Left ventricle myocardium superior (tissue), 1 donor: ENCODE measurements at regions of chr18 and their contacts with region 1.

Region 1: GRCh38 chr18:63439334-63439733 is 17.1 kb upstream of the VPS4B start:
- DNase-seq: no peak
- ATAC-seq: peak; percentile 71

Region 2: GRCh38 chr18:63016270-63016669 is 423.1 kb before region 1 on chr18:
- intact Hi-C with region 1: loop called (anchors 10 kb)
- DNase-seq: no peak
- ATAC-seq: peak; percentile 50

Region 3: DNA sequence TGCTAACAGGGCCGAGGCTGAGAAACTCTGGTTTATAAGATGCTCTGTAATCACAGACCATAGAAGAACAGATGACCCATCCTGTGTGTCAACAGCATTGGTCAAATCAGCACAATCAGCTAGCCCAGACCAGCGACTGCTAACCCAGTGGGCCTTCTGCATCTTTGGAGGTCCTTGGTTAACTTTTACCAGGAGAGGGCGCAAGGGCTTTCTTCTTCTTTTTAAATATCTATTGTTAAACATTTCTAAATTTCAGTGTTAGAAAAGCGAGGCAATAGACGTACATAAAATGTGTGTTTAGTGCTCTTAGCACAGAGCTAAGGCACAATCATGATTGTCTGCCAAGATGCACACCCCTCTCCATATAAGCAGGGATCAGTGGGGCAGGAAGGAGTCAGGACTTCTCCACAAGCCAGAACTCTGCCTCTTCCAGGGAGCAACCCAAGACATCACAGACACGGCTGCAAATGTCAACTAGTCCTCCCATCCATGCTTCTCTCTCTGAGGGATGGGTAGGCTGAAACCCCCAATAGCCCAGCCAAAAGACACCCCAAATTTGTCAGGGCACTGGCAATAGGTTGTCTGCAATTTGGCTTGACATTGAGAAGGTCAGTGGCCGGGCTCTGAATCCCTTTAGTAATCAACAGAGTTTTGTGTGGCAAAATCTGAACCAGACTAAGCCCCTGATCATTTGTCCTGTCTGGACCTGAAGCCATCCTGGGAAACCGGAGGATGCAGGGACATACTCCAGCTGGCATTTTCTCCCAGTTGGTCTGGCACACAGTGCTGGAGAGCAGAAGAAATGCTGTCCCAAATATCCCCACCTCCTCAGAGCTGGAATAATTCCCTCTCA is 308.0 kb before region 1 on chr18:
- intact Hi-C with region 1: loop called (anchors 10 kb)
- DNase-seq: no peak
- ATAC-seq: peak; percentile 77

Region 4: GRCh38 chr18:63322841-63323634 is 116.3 kb before region 1 on chr18:
- intact Hi-C with region 1: no loop called
- DNase-seq: no peak
- ATAC-seq: peak; percentile 19

Region 5: GRCh38 chr18:63339920-63340484 is 99.3 kb before region 1 on chr18:
- intact Hi-C with region 1: loop called (anchors 10 kb)
- DNase-seq: no peak
- ATAC-seq: no peak

Region 6: DNA sequence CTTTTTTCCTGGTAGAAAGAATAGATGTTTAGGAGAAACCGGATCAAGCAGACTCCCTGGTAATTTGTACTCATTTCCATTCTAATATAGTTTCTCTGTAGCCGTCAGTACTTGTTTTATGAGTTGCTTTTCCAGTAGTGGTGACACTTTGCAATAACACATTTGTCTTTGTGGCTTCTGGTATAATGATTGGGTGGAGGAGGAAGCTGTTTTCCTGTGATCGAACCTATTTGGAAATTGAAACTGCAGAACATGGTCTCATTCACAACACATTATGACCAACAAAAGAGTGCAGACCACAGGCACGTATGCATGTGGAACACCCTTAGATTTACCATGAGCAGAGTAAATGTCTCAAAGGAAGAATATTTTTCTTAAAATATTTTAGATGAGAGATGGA is 95.3 kb after region 1 on chr18:
- intact Hi-C with region 1: no loop called
- DNase-seq: no peak
- ATAC-seq: no peak